Activated CD8-positive, alpha-beta T cell treated with anti-CD3 and anti-CD28 coated beads, Interleukin-2, amount 10 ng/mL, durations not matched to agents 7 days and 5 days (primary cell): ENCODE measurements at regions of chr6 and their contacts with region 1.

Region 1: DNA sequence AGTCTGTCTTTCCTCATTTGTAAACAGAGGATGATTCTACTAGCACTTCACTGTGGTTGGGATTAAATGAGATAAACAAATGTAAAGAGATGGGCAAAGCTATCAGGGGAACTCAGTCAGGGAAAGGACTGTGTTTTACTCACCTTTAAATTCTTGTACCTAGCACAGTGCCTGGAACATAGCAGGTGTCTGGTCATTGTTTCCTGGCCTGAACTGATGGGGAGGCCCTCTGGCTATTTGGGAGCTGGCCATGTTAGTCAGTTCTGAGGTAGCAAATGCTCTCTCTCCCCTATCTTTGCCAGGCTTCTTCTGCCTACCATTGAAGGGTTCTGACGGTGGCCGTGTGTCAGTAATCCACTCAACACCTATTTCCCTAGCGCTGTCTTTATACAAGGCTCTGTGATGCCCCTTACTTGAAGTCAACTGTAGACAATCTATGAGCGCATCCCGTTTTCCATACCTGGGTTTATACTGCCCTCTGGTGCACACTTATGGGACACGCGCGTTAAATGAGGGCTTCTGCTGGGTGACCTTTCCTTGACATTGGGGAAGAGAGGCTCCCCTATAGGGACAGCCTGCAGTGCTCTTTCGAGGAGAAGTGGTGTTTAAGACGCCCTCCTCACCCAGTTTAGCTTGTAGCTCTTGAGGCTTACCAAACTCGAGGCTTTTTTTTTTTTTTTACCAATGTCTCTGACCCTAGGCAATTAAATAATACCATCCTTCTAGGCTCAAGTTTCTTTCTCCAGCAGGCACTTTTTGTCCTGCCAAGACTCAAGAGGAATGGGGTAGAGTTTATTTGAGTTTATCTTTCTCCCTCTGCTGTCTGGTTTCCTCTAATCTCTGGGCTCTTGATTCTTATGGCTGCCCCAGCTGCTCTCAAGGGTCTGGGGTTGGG is 4.0 kb upstream of the SPATS1 start:
- DNase-seq: peak; percentile 80
- ATAC-seq: peak; percentile 91
- H3K4me3 Mint-ChIP-seq: no peak overlapping the region
- H3K27ac Mint-ChIP-seq: no peak overlapping the region
- H3K4me1 Mint-ChIP-seq: peaks cover 2% of the 10 kb centered on the region
- H3K27me3 Mint-ChIP-seq: peaks cover 26% of the 10 kb centered on the region

Region 2: GRCh38 chr6:44327096-44327495 is 11.4 kb before region 1 on chr6:
- CTCF ChIA-PET with region 1: interaction called, 11 read pairs
- POLR2A ChIA-PET with region 1: no interaction called
- DNase-seq: no peak
- ATAC-seq: no peak
- H3K4me3 Mint-ChIP-seq: no peak overlapping the region
- H3K27ac Mint-ChIP-seq: no peak overlapping the region
- H3K4me1 Mint-ChIP-seq: no peaks in the 10 kb centered on the region
- H3K27me3 Mint-ChIP-seq: peaks cover 32% of the 10 kb centered on the region